PC-3 (cell line): ENCODE measurements at regions of chr13 and their contacts with region 1.

Region 1: DNA sequence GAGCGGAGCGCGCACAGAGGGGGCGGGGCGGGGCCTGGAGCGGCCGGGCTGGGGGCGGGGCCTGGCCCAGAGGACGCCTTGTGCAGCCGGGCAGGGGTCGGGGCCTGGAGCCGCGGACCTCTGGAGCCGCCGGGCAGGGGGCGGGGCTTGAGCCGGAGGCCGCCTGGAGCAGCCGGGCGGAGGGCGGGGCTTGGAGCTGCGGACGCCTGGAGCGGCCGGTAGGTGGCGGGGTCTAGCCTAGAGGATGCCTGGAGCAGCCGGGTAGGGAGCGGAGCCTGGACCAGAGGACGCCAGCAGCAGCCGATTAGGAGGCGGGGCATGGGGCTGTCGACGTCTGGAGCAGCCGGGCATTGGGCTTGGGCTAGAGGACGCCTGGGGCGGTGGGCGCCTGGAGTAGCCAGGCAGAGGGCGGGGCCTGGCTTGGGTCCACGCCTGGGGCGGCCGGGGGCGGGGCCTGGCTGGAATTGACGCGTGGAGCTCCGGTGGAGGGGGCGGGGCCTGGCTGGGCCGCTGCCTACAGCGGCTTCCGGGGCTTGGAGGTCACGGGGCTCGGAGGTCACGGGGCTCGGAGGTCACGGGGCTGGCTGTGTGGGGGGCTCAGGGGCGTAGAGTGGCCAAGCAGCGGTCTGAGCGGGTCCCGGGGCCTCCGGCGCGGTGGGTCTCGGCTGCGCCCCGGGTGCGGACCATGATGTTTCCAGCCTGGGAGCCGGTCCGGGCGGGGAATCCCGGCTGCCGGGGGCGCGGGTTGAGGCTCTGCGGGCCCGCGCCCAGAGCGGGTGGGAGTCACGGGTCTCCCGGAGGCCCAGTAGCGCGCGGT is at the start of gene ANKRD10:
- DNase-seq: peak; percentile 94
- ATAC-seq: peak; percentile 81
- H3K4me3 ChIP-seq: peak within 1 kb of the TSS; percentile 98
- H3K27ac ChIP-seq: peak within 1 kb of the TSS; percentile 84
- H3K4me1 ChIP-seq: peaks cover 31% of the 10 kb centered on the region
- H3K27me3 ChIP-seq: no peaks in the 10 kb centered on the region
- CTCF ChIP-seq: peak; percentile 62
- total RNA-seq, gene ANKRD10: 47.1 and 60.2 TPM in 2 replicates

Region 2: GRCh38 chr13:110874508-110874960 is 40.7 kb before region 1 on chr13:
- CTCF ChIA-PET with region 1: interaction called, 3 read pairs
- POLR2A ChIA-PET with region 1: no interaction called
- intact Hi-C with region 1: loop called (anchors 2 kb)
- DNase-seq: peak; percentile 70
- ATAC-seq: peak; percentile 61
- H3K4me3 ChIP-seq: peak overlapping the region; percentile 61
- H3K27ac ChIP-seq: no peak overlapping the region
- H3K4me1 ChIP-seq: peaks cover 24% of the 10 kb centered on the region
- H3K27me3 ChIP-seq: no peaks in the 10 kb centered on the region
- CTCF ChIP-seq: no peak

Region 3: GRCh38 chr13:111006506-111007031 is 91.3 kb after region 1 on chr13:
- CTCF ChIA-PET with region 1: no interaction called
- POLR2A ChIA-PET with region 1: no interaction called
- intact Hi-C with region 1: no loop called
- DNase-seq: no peak
- ATAC-seq: peak; percentile 25
- H3K4me3 ChIP-seq: no peak overlapping the region
- H3K27ac ChIP-seq: peak overlapping the region; percentile 67
- H3K4me1 ChIP-seq: peaks cover 18% of the 10 kb centered on the region
- H3K27me3 ChIP-seq: no peaks in the 10 kb centered on the region
- CTCF ChIP-seq: no peak

Region 4: GRCh38 chr13:111034811-111035210 is 119.5 kb after region 1 on chr13:
- CTCF ChIA-PET with region 1: no interaction called
- POLR2A ChIA-PET with region 1: no interaction called
- intact Hi-C with region 1: loop called (anchors 5 kb)
- DNase-seq: no peak
- ATAC-seq: no peak
- H3K4me3 ChIP-seq: no peak overlapping the region
- H3K27ac ChIP-seq: no peak overlapping the region
- H3K4me1 ChIP-seq: peaks cover 18% of the 10 kb centered on the region
- H3K27me3 ChIP-seq: no peaks in the 10 kb centered on the region
- CTCF ChIP-seq: no peak

Region 5: GRCh38 chr13:111153279-111153976 is 238.2 kb after region 1 on chr13:
- CTCF ChIA-PET with region 1: no interaction called
- POLR2A ChIA-PET with region 1: interaction called, 10 read pairs
- intact Hi-C with region 1: loop called (anchors 10 kb)
- DNase-seq: peak; percentile 82
- ATAC-seq: peak; percentile 81
- H3K4me3 ChIP-seq: peak overlapping the region; percentile 93
- H3K27ac ChIP-seq: peak overlapping the region; percentile 72
- H3K4me1 ChIP-seq: peaks cover 19% of the 10 kb centered on the region
- H3K27me3 ChIP-seq: peaks cover 22% of the 10 kb centered on the region
- CTCF ChIP-seq: no peak